Panc1 (cell line): ENCODE measurements at regions of chr19 and their contacts with region 1.

Region 1: DNA sequence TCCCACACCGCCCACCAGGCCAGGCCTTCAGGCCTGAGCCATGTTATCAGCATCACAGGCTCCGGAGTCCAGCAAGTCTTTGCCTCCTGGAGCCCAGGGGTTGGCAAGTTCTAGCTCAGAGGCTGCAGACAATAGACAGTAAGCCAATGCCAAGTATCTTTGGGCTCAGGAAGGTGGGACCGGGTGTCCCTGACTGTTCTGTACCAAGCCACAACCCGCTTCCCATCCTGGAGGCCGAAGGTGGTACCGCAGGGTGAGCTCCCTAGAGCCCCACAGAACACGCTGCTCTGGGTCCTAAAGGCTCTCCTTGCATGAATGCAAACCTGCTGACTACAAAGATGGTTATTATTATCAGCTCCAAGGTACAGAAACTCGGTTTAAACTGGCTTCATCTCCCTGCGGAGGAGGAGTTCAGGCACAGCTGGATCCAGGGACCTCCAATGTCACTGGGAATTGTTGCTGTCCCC is 5.5 kb upstream of the FSTL3 start:
- DNase-seq: no peak
- ATAC-seq: peak; percentile 43; the same call in 1 of the 2 replicates
- H3K4me3 ChIP-seq: no peak overlapping the region
- H3K27ac ChIP-seq: no peak overlapping the region
- H3K4me1 ChIP-seq: peaks cover 6% of the 10 kb centered on the region
- H3K27me3 ChIP-seq: no peaks in the 10 kb centered on the region
- CTCF ChIP-seq: no peak

Region 2: GRCh38 chr19:732148-733069 is 61.8 kb after region 1 on chr19:
- CTCF ChIA-PET with region 1: interaction called, 6 read pairs
- POLR2A ChIA-PET with region 1: no interaction called
- in situ Hi-C with region 1: no loop called
- intact Hi-C with region 1: loop called (anchors 5 kb)
- DNase-seq: no peak
- ATAC-seq: no peak
- H3K4me3 ChIP-seq: no peak overlapping the region
- H3K27ac ChIP-seq: no peak overlapping the region
- H3K4me1 ChIP-seq: no peaks in the 10 kb centered on the region; the same call in 1 of the 2 replicates
- H3K27me3 ChIP-seq: no peaks in the 10 kb centered on the region
- CTCF ChIP-seq: no peak

Region 3: GRCh38 chr19:799076-799881 is 128.6 kb after region 1 on chr19:
- CTCF ChIA-PET with region 1: no interaction called
- POLR2A ChIA-PET with region 1: no interaction called
- in situ Hi-C with region 1: no loop called
- intact Hi-C with region 1: no loop called
- DNase-seq: no peak
- ATAC-seq: no peak
- H3K4me3 ChIP-seq: peak overlapping the region; percentile 82 to 87
- H3K27ac ChIP-seq: peak overlapping the region; percentile 89
- H3K4me1 ChIP-seq: peaks cover 18% of the 10 kb centered on the region
- H3K27me3 ChIP-seq: no peaks in the 10 kb centered on the region
- CTCF ChIP-seq: no peak; the same call in 1 of the 2 replicates

Region 4: DNA sequence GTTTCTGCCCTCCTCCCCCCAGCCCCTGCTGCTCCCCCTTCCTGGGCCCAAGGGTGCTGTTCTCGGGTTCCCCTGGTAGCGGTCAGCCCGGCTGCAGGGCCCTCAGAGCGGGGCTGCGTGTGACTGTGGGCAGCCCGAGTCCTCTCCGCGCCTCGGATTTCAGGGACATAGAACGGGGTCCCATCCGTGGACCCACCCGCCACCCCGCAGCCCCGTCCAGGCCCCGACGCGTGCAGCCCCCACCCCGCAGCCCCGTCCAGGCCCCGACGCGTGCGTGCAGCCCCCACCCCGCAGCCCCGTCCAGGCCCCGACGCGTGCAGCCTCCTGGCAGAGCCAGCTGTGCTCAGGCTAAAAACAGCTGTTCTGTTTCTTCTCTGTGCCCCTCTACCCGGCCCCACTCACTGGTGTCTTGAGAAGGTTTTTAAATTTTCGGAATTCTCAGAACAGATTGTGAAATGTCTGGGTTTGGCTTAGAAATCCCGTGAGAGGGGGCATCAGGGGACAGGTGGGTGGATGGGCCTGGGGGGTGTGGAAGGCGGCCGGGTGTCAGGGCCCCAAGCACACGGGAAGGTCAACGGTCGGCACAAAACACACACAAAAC is 164.7 kb after region 1 on chr19:
- CTCF ChIA-PET with region 1: no interaction called
- POLR2A ChIA-PET with region 1: no interaction called
- in situ Hi-C with region 1: no loop called
- intact Hi-C with region 1: no loop called
- DNase-seq: no peak
- ATAC-seq: no peak
- H3K4me3 ChIP-seq: no peak overlapping the region
- H3K27ac ChIP-seq: no peak overlapping the region
- H3K4me1 ChIP-seq: no peaks in the 10 kb centered on the region
- H3K27me3 ChIP-seq: no peaks in the 10 kb centered on the region
- CTCF ChIP-seq: no peak